Endothelial cell of umbilical vein (primary cell): ENCODE measurements at regions of chr5 and their contacts with region 1.

Region 1: DNA sequence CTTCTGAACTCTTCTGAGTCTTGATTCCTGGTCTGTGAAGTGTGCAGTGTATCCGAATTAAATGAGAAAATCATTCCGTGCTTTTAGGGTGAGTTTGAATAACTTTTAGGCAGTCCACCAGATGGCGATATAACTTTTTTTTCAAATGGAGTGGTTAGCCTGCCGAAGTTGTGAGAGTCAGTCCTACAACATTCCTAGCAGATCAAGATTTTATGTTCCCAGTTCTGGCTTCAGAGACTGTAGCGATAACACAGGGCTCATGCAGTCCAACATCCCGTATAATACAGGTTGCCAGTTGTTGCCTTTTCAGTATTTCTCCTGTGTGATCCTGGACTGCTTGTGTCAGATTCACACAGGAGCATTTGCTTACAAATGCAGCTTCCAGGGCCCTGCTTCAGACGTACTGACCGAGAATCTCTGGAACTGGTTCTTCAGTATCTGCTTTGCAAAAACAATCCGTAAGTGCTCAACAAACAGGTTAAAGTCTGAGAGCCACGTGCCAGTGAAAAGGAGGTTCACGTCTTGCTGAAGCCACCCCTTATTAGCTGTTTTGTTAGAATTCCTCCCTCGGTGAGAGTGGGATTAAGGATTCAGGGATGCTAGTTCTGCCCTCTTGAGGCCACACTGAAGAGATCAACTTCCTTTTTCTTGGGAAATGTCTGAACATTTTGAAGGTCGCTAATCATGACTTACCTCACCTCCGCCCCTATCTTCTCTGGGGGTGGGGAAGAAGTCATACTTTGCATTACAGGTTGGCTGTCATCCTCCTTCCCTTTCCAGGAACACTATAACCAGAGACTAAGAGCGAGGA is 22.8 kb downstream of the SMIM3 start:
- DNase-seq: peak; percentile 80
- H3K4me3 ChIP-seq: peak overlapping the region in 2 of 3 experiments; percentile 14 to 24
- H3K27ac ChIP-seq: no peak overlapping the region
- H3K4me1 ChIP-seq: no peaks in the 10 kb centered on the region
- H3K27me3 ChIP-seq: peaks cover 15 to 44% of the 10 kb centered on the region in 2 experiments
- CTCF ChIP-seq: peak; percentile 31 to 53
- POLR2A ChIP-seq: no peak

Region 2: DNA sequence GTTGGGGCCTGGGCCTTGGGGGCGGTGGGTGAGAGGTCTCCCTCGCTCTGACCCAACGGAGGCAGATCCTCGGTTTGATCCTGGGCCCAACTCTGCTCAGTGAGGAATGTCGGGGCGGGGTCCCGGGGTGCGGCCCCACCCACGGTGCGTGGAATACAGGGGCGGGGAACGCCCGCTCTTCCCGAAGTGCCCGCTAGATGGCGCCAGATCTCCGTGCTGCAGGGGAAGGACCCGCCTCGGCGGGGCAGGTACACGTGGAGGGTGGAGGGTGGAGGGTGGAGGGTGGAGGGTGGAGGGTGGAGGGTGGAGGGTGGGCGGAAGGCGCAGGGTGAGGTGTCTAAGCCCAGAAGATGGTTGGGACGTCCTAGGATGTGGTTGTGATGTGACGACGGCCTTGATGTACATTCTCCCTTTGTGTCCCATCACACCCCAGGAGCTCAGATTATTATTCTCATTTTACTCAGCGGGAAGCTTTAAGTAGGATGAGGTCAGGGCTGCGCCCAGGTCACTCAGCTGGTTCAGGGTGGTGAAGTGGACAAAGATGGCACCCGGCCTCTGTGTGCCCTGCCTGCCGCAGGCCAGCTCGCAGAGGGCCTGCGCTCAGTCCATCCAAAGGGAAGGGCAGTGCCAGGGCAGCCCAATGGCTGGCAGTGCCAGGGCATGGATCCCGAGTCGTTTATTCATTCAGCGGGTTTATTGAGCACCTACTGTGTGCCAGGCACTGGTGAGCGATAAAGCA is 342.3 kb before region 1 on chr5:
- CTCF ChIA-PET with region 1: interaction called, 10 read pairs
- POLR2A ChIA-PET with region 1: no interaction called
- dilution Hi-C with region 1: no loop called
- intact Hi-C with region 1: no loop called
- DNase-seq: peak; percentile 33
- H3K4me3 ChIP-seq: peak overlapping the region in 1 of 3 experiments; percentile 17
- H3K27ac ChIP-seq: no peak overlapping the region
- H3K4me1 ChIP-seq: peaks cover 4% of the 10 kb centered on the region
- H3K27me3 ChIP-seq: no peaks in the 10 kb centered on the region
- CTCF ChIP-seq: peak; percentile 57 to 88
- POLR2A ChIP-seq: no peak

Region 3: GRCh38 chr5:150758531-150759333 is 42.6 kb before region 1 on chr5 and contains the start of gene DCTN4:
- CTCF ChIA-PET with region 1: interaction called, 11 read pairs
- POLR2A ChIA-PET with region 1: no interaction called
- dilution Hi-C with region 1: no loop called
- intact Hi-C with region 1: no loop called
- DNase-seq: peak; percentile 99
- H3K4me3 ChIP-seq: peak within 1 kb of the TSS; percentile 62 to 80 (median 62)
- H3K27ac ChIP-seq: peak within 1 kb of the TSS; percentile 76
- H3K4me1 ChIP-seq: peaks cover 13% of the 10 kb centered on the region
- H3K27me3 ChIP-seq: peaks cover 0 to 5% of the 10 kb centered on the region in 2 experiments
- CTCF ChIP-seq: no peak
- POLR2A ChIP-seq: peak; percentile 84
- total RNA-seq, gene DCTN4: 42.8 and 47.3 TPM in 2 replicates

Region 4: DNA sequence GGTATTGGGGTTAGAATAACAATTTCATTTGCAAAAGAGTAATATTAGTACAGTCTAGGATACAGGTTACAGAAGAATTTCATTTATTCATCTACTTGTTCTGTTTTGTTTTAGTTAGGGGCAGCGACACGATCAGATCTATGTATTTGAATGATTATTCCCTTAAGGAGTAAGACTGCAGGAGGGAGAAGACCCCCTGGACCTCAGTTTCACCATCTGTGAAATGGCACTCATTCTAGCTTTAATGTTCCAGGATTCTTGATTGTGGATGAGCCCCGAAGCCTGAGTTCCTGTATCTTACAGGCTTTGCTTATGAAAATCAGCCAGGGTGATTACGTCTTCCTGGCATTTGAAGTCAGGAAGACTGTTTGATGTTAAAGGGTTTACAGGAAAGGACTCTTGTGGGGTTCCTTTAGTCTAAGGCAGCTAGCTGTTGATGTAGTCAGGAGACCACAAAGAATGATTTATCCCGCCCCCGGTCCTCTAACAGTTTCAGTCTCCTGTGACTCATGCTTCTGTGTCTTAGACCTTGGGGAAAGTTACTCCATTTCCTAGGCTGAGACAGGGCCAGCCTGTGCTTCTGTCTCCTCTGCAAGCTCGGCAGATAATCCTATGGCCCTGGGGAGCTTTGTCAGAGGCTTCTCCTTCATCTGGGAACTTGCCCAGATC is 11.2 kb before region 1 on chr5:
- CTCF ChIA-PET with region 1: interaction called, 36 read pairs
- POLR2A ChIA-PET with region 1: no interaction called
- dilution Hi-C with region 1: no loop called
- intact Hi-C with region 1: no loop called
- DNase-seq: peak; percentile 87
- H3K4me3 ChIP-seq: no peak overlapping the region
- H3K27ac ChIP-seq: no peak overlapping the region
- H3K4me1 ChIP-seq: peaks cover 9% of the 10 kb centered on the region
- H3K27me3 ChIP-seq: peaks cover 7 to 9% of the 10 kb centered on the region in 2 experiments
- CTCF ChIP-seq: no peak
- POLR2A ChIP-seq: no peak

Region 5: GRCh38 chr5:150989695-150990094 is 188.4 kb after region 1 on chr5:
- CTCF ChIA-PET with region 1: no interaction called
- POLR2A ChIA-PET with region 1: no interaction called
- dilution Hi-C with region 1: no loop called
- intact Hi-C with region 1: loop called (anchors 1 kb)
- DNase-seq: no peak
- H3K4me3 ChIP-seq: no peak overlapping the region
- H3K27ac ChIP-seq: no peak overlapping the region
- H3K4me1 ChIP-seq: no peaks in the 10 kb centered on the region
- H3K27me3 ChIP-seq: peaks cover 0 to 7% of the 10 kb centered on the region in 2 experiments
- CTCF ChIP-seq: peak in 1 of 2 donors; percentile 12
- POLR2A ChIP-seq: no peak

Region 6: GRCh38 chr5:151068433-151069197 is 267.3 kb after region 1 on chr5:
- CTCF ChIA-PET with region 1: no interaction called
- POLR2A ChIA-PET with region 1: no interaction called
- dilution Hi-C with region 1: no loop called
- intact Hi-C with region 1: no loop called
- DNase-seq: no peak
- H3K4me3 ChIP-seq: no peak overlapping the region
- H3K27ac ChIP-seq: peak overlapping the region; percentile 52
- H3K4me1 ChIP-seq: peaks cover 27% of the 10 kb centered on the region
- H3K27me3 ChIP-seq: no peaks in the 10 kb centered on the region
- CTCF ChIP-seq: no peak
- POLR2A ChIP-seq: no peak